PC-9 (cell line): ENCODE measurements at regions of chr1 and their contacts with region 1.

Region 1: DNA sequence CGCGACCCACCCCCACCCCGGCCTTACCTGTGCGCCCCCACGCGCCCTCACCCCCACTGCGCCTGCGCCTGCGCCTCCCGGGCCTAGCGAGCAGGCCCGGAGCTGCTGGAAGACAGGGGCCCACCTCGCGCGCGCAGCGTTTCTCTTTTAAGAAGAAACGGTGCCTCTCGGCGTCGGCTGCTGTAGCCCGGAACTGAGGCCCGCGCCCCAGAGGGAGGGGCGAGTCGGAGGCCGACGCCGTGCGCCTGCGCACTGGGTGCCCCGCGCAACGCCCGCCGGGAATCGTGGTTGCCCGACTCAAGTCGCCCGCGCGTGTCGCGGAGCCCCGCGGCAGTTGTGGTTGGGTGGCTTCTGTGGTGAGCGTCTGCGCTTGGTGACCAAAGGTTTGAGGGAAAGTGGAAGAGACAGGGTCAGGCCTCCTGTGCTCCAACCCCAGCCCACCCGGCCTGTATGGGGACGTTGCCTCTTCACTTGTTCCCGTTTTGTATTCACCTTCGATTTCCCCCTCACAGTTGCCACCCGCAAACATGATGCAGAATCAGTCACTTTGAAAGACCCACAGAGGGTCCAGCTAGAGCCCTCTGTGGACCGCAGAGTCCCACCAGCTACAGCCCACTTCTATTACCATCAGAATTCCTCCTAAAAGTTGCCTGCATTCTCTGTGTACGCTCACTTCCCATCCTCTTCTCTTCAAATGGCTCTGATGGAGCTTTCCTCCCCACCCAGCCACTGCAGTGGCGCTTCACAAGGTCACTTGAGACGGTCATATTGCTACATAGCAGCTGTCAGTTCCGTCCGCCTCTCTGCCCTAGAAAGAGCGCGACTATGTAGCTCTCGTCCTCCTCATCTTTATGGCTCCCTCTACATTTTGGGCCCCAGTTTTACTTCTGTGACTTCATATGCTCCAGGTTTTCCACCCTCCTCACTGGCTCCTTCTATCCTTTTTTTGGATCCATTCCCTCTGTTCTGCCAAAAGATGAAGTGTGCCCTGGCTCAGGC is at the start of gene ZNF692:
- DNase-seq: peak; percentile 75 to 95
- H3K4me3 ChIP-seq: peak within 1 kb of the TSS; percentile 75
- H3K27ac ChIP-seq: peak within 1 kb of the TSS; percentile 72
- H3K4me1 ChIP-seq: peaks cover 16% of the 10 kb centered on the region
- H3K27me3 ChIP-seq: no peaks in the 10 kb centered on the region
- CTCF ChIP-seq: no peak
- total RNA-seq, gene ZNF692: 46.6 and 51.7 TPM in 2 replicates

Region 2: GRCh38 chr1:248752161-248753028 is 106.8 kb before region 1 on chr1:
- CTCF ChIA-PET with region 1: no interaction called
- POLR2A ChIA-PET with region 1: no interaction called
- intact Hi-C with region 1: no loop called
- DNase-seq: no peak
- H3K4me3 ChIP-seq: no peak overlapping the region
- H3K27ac ChIP-seq: no peak overlapping the region
- H3K4me1 ChIP-seq: no peaks in the 10 kb centered on the region
- H3K27me3 ChIP-seq: no peaks in the 10 kb centered on the region
- CTCF ChIP-seq: no peak

Region 3: GRCh38 chr1:248873409-248873992 is 14.3 kb after region 1 on chr1:
- CTCF ChIA-PET with region 1: no interaction called
- POLR2A ChIA-PET with region 1: no interaction called
- intact Hi-C with region 1: loop called (anchors 1 kb)
- DNase-seq: peak; percentile 89 to 98
- H3K4me3 ChIP-seq: peak overlapping the region; percentile 75
- H3K27ac ChIP-seq: peak overlapping the region; percentile 83
- H3K4me1 ChIP-seq: peaks cover 10% of the 10 kb centered on the region
- H3K27me3 ChIP-seq: no peaks in the 10 kb centered on the region
- CTCF ChIP-seq: no peak